CD8-positive, alpha-beta memory T cell (primary cell): ENCODE measurements at regions of chr12 and their contacts with region 1.

Region 1: GRCh38 chr12:4107436-4107878 is 166.1 kb upstream of the CCND2 start:
- DNase-seq: peak; percentile 39 to 80 (median 75)
- H3K4me3 ChIP-seq: no peak overlapping the region
- H3K4me3 Mint-ChIP-seq: peak overlapping the region in 5 of 7 donors; percentile 33 to 66 (median 63)
- H3K27ac ChIP-seq: no peak overlapping the region
- H3K27ac Mint-ChIP-seq: peak overlapping the region; percentile 65 to 97 (median 92)
- H3K4me1 ChIP-seq: peaks cover 4% of the 10 kb centered on the region
- H3K4me1 Mint-ChIP-seq: peaks cover 13 to 19% (median 18%) of the 10 kb centered on the region in 3 donors
- H3K27me3 ChIP-seq: peaks cover 4% of the 10 kb centered on the region
- H3K27me3 Mint-ChIP-seq: peaks cover 6 to 9% of the 10 kb centered on the region in 2 donors

Region 2: DNA sequence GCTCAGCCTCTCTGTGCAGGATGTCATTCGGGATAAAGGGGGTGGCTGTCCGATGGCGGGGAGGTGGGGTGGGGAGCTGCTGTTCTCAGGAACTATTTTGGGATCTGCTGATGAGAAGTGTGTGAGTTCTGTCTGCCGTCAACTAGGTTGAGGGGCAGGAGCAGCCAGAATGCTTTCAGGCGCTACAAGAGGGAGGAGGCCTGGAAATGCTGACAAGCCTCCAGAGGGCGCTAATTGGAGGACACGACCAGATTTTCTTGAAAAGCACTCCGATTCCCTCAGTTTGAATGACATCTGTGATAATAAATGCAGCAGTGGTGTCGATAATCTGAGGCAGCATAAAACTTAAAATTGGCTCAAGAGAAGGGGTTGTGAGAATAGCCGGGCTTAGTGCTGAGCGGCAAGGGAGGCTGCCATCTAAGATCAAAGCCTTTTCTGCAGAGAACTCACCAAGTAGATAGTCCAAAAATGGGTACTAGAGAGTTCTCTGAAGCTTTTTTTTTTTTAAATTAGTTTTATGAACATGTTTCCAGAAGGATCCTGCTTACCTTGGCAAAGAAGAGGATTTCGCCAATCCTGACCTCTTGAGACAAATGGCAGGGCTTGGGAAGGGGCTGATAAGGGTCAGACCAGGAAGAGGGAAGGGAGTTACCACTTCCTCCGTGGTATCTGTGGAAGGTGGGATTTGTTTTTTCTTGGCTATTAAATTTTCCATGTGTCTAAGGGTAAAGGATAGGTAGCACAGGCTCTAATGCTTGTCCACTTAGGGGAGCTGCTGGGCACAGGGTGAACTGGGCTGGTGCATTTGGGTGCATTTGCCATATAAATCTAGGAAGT is 448.9 kb before region 1 on chr12:
- CTCF ChIA-PET with region 1: no interaction called
- POLR2A ChIA-PET with region 1: no interaction called
- DNase-seq: peak in 4 of 5 donors; percentile 6 to 59 (median 17)
- H3K4me3 ChIP-seq: no peak overlapping the region
- H3K4me3 Mint-ChIP-seq: no peak overlapping the region
- H3K27ac ChIP-seq: no peak overlapping the region
- H3K27ac Mint-ChIP-seq: peak overlapping the region in 5 of 8 donors; percentile 15 to 85 (median 41)
- H3K4me1 ChIP-seq: no peaks in the 10 kb centered on the region
- H3K4me1 Mint-ChIP-seq: peaks cover 0 to 4% (median 0%) of the 10 kb centered on the region in 3 donors
- H3K27me3 ChIP-seq: no peaks in the 10 kb centered on the region
- H3K27me3 Mint-ChIP-seq: peaks cover 0 to 2% of the 10 kb centered on the region in 2 donors

Region 3: DNA sequence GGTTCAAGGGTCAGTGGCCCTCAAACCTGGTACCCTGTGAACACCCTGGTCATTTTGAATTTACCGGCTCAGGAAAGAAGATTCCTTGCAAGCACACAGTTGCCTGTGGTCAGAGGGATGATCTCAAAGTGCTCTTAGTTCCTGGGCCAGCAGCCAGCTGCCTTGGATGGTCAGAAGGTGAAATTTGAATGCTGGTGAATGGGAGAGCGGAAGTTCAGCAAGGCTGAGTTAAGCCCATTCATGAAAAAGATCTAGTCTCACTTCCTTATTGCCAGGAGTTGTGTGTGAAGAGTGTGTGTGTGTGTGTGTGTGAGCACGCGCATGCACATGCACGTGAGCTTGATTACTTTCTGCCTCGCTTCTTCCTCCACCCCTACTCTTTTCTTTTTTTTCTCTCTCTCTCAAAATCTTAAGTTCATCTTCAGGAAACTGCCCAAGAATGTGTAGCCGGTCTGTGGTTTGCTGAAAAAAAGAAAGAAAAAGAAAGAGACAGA is 10.6 kb after region 1 on chr12:
- CTCF ChIA-PET with region 1: interaction called, 13 read pairs
- POLR2A ChIA-PET with region 1: no interaction called
- DNase-seq: peak in 2 of 5 donors; percentile 28 to 36
- H3K4me3 ChIP-seq: peak overlapping the region; percentile 42
- H3K4me3 Mint-ChIP-seq: peak overlapping the region; percentile 44 to 83 (median 55)
- H3K27ac ChIP-seq: no peak overlapping the region
- H3K27ac Mint-ChIP-seq: peak overlapping the region in 7 of 8 donors; percentile 12 to 82 (median 59)
- H3K4me1 ChIP-seq: peaks cover 30% of the 10 kb centered on the region
- H3K4me1 Mint-ChIP-seq: peaks cover 31 to 47% (median 42%) of the 10 kb centered on the region in 3 donors
- H3K27me3 ChIP-seq: no peaks in the 10 kb centered on the region
- H3K27me3 Mint-ChIP-seq: peaks cover 8% of the 10 kb centered on the region in 2 donors

Region 4: GRCh38 chr12:4269279-4269991 is 162.0 kb after region 1 on chr12:
- CTCF ChIA-PET with region 1: interaction called, 79 read pairs
- POLR2A ChIA-PET with region 1: interaction called, 4 read pairs
- DNase-seq: peak; percentile 87 to 95 (median 92)
- H3K4me3 ChIP-seq: peak overlapping the region; percentile 95
- H3K4me3 Mint-ChIP-seq: peak overlapping the region; percentile 93 to 100 (median 99)
- H3K27ac ChIP-seq: peak overlapping the region; percentile 83
- H3K27ac Mint-ChIP-seq: peak overlapping the region; percentile 93 to 100 (median 100)
- H3K4me1 ChIP-seq: peaks cover 12% of the 10 kb centered on the region
- H3K4me1 Mint-ChIP-seq: peaks cover 18 to 37% (median 22%) of the 10 kb centered on the region in 3 donors
- H3K27me3 ChIP-seq: peaks cover 3% of the 10 kb centered on the region
- H3K27me3 Mint-ChIP-seq: peaks cover 4 to 10% of the 10 kb centered on the region in 2 donors

Region 5: GRCh38 chr12:4653257-4653656 is 545.8 kb after region 1 on chr12:
- CTCF ChIA-PET with region 1: no interaction called
- POLR2A ChIA-PET with region 1: no interaction called
- DNase-seq: no peak
- H3K4me3 ChIP-seq: no peak overlapping the region
- H3K4me3 Mint-ChIP-seq: peak overlapping the region in 1 of 7 donors; percentile 19
- H3K27ac ChIP-seq: no peak overlapping the region
- H3K27ac Mint-ChIP-seq: peak overlapping the region in 1 of 8 donors; percentile 61
- H3K4me1 ChIP-seq: peaks cover 16% of the 10 kb centered on the region
- H3K4me1 Mint-ChIP-seq: peaks cover 52 to 64% (median 55%) of the 10 kb centered on the region in 3 donors
- H3K27me3 ChIP-seq: no peaks in the 10 kb centered on the region
- H3K27me3 Mint-ChIP-seq: no peaks in the 10 kb centered on the region